Activated CD4-positive, alpha-beta memory T cell treated with anti-CD3 and anti-CD28 coated beads for 36 hours (primary cell): ENCODE measurements at regions of chr17 and their contacts with region 1.

Region 1: GRCh38 chr17:80855948-80856862 is 135.4 kb upstream of the CHMP6 start:
- DNase-seq: peak; percentile 96
- H3K4me3 Mint-ChIP-seq: peak overlapping the region; percentile 24
- H3K27ac Mint-ChIP-seq: peak overlapping the region; percentile 94
- H3K4me1 Mint-ChIP-seq: peaks cover 59% of the 10 kb centered on the region
- H3K27me3 Mint-ChIP-seq: no peaks in the 10 kb centered on the region

Region 2: DNA sequence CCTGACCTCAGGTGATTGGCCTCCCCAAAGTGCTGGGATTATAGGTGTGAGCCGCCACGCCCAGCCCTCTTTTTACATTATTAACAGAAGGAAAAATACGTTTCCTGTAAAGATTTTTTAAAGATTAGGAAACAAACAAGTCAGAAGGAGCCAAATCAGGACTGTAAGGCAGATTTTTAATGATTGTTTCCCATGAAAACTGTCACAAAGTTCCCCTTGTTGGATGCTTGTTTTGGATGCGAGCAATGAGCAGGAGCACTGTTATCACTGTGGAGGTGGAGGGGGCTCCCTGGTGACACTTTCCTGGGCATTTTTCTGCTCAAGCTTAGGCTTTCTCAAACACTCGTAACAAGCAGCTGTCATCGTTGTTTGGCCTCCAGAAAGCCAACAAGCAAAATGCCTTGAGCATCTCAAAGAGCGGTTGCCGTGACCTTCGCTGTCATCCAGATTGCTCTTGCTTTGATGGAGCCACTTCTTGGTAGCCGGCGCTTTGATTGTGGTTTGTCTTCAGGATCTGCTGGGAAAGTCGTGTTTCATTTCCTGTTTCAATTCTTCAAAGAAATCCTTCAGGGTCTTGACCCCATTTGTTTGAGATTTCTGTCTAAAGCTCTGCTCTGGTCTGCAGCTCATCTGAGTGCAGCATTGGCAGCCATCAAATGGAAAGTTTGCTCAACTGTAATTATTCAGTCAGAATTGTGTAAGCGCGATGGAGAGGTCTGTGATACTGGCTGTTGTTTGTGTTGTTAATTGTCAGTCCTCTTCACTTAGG is 182.9 kb before region 1 on chr17:
- CTCF ChIA-PET with region 1: no interaction called
- POLR2A ChIA-PET with region 1: no interaction called
- intact Hi-C with region 1: loop called (anchors 10 kb)
- DNase-seq: peak; percentile 41
- H3K4me3 Mint-ChIP-seq: no peak overlapping the region
- H3K27ac Mint-ChIP-seq: peak overlapping the region; percentile 2
- H3K4me1 Mint-ChIP-seq: peaks cover 50% of the 10 kb centered on the region
- H3K27me3 Mint-ChIP-seq: no peaks in the 10 kb centered on the region

Region 3: GRCh38 chr17:80761110-80761871 is 94.9 kb before region 1 on chr17:
- CTCF ChIA-PET with region 1: interaction called, 3 read pairs
- POLR2A ChIA-PET with region 1: no interaction called
- intact Hi-C with region 1: loop called (anchors 1 kb)
- DNase-seq: peak; percentile 86
- H3K4me3 Mint-ChIP-seq: peak overlapping the region; percentile 68
- H3K27ac Mint-ChIP-seq: peak overlapping the region; percentile 96
- H3K4me1 Mint-ChIP-seq: peaks cover 73% of the 10 kb centered on the region
- H3K27me3 Mint-ChIP-seq: no peaks in the 10 kb centered on the region

Region 4: DNA sequence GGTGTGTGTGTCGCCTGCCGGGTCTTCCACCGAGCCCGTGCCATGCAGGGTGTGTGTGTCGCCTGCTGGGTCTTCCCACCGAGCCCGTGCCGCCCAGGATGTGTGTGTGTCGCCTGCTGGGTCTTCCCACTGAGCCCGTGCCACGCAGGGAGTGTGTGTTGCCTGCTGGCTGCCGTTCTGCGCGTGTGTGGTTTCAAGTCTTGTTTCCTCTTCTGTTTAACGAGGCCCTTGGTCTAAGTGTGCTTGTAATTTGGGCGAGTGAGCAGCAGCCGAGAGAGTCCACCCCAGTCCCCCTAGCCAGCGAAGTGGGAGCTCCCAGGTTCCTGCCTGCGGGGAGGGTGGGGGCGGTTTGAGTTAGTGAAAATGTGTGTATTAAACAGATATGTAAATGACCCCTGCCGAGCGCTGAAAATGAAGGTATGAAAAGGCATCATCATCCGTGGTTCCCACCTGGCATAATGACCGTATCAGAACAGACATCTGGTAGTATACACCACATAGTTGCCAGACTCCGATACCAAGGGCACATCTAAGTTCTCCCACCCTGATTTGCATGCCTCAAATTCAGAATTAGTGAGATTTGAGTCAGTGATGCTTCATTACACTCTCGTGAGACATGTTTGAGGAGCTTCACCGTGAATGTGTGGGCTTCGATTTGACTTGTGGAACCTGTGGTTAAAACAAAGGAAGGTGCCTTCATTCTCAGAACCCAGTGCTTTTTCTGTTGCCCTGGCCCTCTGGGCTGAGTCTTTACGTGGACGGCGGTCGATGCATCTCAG is 20.9 kb after region 1 on chr17:
- CTCF ChIA-PET with region 1: interaction called, 3 read pairs
- POLR2A ChIA-PET with region 1: interaction called, 22 read pairs
- intact Hi-C with region 1: loop called (anchors 1 kb)
- DNase-seq: peak; percentile 89
- H3K4me3 Mint-ChIP-seq: peak overlapping the region; percentile 70
- H3K27ac Mint-ChIP-seq: peak overlapping the region; percentile 98
- H3K4me1 Mint-ChIP-seq: peaks cover 49% of the 10 kb centered on the region
- H3K27me3 Mint-ChIP-seq: no peaks in the 10 kb centered on the region

Region 5: DNA sequence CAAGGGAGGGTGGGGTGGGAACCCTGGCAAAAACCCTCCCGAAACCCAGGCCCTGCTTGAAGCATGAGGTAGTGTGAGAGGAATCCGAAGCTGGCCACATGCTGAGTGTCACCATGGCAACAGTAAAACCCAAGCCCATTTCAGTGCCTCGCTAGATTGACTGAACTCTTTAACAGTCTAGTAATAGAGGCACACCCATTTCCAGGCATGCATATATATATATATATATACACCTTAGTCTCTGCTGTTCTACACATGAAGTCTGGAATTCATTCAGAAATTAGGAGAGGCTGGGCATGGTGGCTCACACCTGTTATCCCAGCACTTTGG is 75.7 kb after region 1 on chr17:
- CTCF ChIA-PET with region 1: no interaction called
- POLR2A ChIA-PET with region 1: no interaction called
- intact Hi-C with region 1: no loop called
- DNase-seq: no peak
- H3K4me3 Mint-ChIP-seq: no peak overlapping the region
- H3K27ac Mint-ChIP-seq: no peak overlapping the region
- H3K4me1 Mint-ChIP-seq: peaks cover 14% of the 10 kb centered on the region
- H3K27me3 Mint-ChIP-seq: no peaks in the 10 kb centered on the region

Region 6: DNA sequence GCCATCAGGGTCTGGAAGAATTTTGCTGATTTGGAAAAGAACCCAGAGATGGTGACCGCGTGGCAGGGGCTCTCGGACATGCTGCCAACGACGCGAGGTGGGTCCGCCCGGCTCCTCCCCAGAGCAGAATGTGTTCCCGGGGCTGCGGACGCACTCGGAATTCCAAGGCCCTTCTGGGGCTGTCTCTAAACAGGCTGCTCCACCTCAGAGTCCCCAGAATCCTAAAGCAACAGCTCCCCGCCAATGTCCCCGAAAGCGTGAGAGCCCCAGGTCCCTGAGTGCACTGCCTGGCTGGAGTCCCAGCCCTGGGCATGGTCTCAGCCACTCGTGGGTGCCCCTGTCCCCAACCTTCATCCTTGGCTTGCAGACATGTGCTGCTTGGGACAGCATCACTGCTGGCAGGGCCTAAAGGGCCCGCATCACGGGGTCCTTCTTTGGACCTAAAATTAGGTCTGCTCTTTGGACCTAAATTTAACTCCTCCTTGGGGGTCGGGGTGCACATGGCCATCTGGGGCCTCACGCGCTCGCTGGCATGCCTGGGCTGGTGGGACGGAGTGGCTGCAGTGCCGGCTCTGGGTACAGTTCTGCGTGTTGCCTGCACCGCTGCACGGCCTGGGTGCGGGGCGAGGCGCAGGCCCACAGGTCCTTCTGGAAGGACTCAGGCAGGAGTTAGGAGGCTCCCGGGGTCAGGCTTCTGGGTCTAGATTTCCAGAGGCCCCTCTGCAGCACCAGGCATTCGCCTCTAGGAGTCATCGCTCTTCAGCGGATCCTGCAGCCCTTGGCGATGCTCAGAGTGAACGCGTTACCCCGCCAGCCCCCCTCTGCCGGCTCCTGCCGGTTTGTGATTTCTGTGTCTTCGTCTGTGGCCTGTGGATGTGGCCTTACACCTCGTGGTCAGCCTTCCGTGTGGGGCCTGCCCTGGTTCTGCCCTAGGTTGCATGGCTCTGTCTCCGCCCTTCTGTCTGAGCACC is 93.5 kb after region 1 on chr17:
- CTCF ChIA-PET with region 1: no interaction called
- POLR2A ChIA-PET with region 1: no interaction called
- intact Hi-C with region 1: no loop called
- DNase-seq: no peak
- H3K4me3 Mint-ChIP-seq: no peak overlapping the region
- H3K27ac Mint-ChIP-seq: no peak overlapping the region
- H3K4me1 Mint-ChIP-seq: no peaks in the 10 kb centered on the region
- H3K27me3 Mint-ChIP-seq: no peaks in the 10 kb centered on the region